ENCODE measurements at regions of chr1 and their contacts with region 1.

Region 1: GRCh38 chr1:161225534-161226319 is at the start of gene TOMM40L:
- DNase-seq: peak; percentile 99
- H3K4me3 ChIP-seq: peak within 1 kb of the TSS; percentile 71 to 72 (median 71)
- H3K27ac ChIP-seq: peak within 1 kb of the TSS; percentile 40
- H3K4me1 ChIP-seq: peaks cover 14% of the 10 kb centered on the region
- H3K27me3 ChIP-seq: no peaks in the 10 kb centered on the region
- CTCF ChIP-seq: peak; percentile 58 to 70
- total RNA-seq, gene TOMM40L: 13.8 to 16.3 TPM

Region 2: GRCh38 chr1:160781914-160782689 is 443.6 kb before region 1 on chr1:
- CTCF ChIA-PET with region 1: no interaction called
- dilution Hi-C with region 1: no loop called
- in situ Hi-C with region 1: no loop called
- intact Hi-C with region 1: no loop called
- DNase-seq: no peak
- H3K4me3 ChIP-seq: no peak overlapping the region
- H3K27ac ChIP-seq: no peak overlapping the region
- H3K4me1 ChIP-seq: peaks cover 4% of the 10 kb centered on the region
- H3K27me3 ChIP-seq: no peaks in the 10 kb centered on the region
- CTCF ChIP-seq: no peak

Region 3: GRCh38 chr1:161192476-161193465 is 33.0 kb before region 1 on chr1:
- CTCF ChIA-PET with region 1: no interaction called
- dilution Hi-C with region 1: no loop called
- in situ Hi-C with region 1: no loop called
- intact Hi-C with region 1: loop called (anchors 1 kb)
- DNase-seq: peak; percentile 48
- H3K4me3 ChIP-seq: no peak overlapping the region
- H3K27ac ChIP-seq: no peak overlapping the region
- H3K4me1 ChIP-seq: peaks cover 1% of the 10 kb centered on the region
- H3K27me3 ChIP-seq: no peaks in the 10 kb centered on the region
- CTCF ChIP-seq: peak; percentile 91 to 94

Region 4: DNA sequence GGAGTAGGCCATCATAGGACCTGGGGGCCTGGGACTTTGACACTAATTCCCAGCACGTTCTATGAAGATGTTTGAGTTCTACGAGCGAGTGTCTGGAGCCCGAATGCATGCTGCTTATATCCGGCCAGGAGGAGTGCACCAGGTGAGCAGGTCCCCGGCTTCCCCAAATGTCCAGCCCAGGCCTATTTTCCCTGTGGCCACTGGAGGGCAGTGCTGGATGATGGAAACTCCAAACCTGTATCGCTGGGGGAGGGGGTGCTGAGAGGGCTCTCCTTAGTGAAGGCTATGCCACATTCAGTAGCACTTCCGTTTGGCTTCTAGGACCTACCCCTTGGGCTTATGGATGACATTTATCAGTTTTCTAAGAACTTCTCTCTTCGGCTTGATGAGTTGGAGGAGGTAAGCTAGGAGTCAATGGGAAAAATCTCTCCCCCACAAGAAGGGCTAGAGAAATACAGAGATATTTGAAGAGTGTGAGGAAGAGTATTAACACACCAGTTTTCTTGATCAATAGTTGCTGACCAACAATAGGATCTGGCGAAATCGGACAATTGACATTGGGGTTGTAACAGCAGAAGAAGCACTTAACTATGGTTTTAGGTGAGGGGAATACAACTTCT is 15.8 kb before region 1 on chr1:
- CTCF ChIA-PET with region 1: interaction called, 3 read pairs
- dilution Hi-C with region 1: no loop called
- in situ Hi-C with region 1: no loop called
- intact Hi-C with region 1: loop called (anchors 1 kb)
- DNase-seq: peak; percentile 70
- H3K4me3 ChIP-seq: no peak overlapping the region
- H3K27ac ChIP-seq: no peak overlapping the region
- H3K4me1 ChIP-seq: no peaks in the 10 kb centered on the region
- H3K27me3 ChIP-seq: no peaks in the 10 kb centered on the region
- CTCF ChIP-seq: peak; percentile 91 to 96

Region 5: DNA sequence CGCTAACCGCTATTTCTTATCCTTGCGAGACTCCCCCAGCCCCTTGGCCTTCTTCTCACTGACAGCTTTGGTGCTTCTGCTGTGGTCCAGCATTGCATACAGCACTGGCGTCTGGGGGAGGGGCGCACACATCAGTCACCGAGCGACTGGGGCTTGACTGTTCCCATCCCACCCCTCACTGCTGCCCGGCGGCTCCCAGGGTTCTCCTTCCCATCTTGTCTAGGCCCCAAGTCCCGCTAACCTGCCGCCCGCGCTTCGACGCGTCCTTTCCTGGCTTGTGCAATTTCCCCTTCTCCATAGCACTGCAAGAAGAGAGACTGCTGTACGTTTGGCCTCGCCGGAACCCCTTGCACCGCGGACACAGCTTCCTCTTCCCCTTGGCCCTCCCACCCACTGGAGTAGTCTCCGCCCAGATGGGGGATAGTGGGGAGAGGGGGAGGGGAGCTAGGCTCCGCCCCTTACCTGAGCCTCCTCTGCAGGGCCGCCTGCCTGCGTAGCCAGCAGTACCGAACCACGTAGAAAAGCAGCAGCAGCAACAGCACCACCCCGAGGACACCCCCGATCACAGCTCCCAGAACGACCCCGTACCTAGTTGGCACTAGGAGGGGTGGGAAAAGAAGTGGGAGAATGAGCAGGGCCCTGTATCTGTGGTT is 80.3 kb after region 1 on chr1:
- CTCF ChIA-PET with region 1: interaction called, 5 read pairs
- dilution Hi-C with region 1: loop called (anchors 5 kb)
- in situ Hi-C with region 1: no loop called
- intact Hi-C with region 1: no loop called
- DNase-seq: peak; percentile 42
- H3K4me3 ChIP-seq: peak overlapping the region; percentile 51 to 85 (median 76)
- H3K27ac ChIP-seq: no peak overlapping the region
- H3K4me1 ChIP-seq: peaks cover 11% of the 10 kb centered on the region
- H3K27me3 ChIP-seq: no peaks in the 10 kb centered on the region
- CTCF ChIP-seq: peak; percentile 21 to 54

Region 6: GRCh38 chr1:161382214-161383019 is 156.7 kb after region 1 on chr1:
- CTCF ChIA-PET with region 1: interaction called, 15 read pairs
- dilution Hi-C with region 1: loop called (anchors 25 kb)
- in situ Hi-C with region 1: loop called (anchors 5 to 10 kb)
- intact Hi-C with region 1: loop called (anchors 1 kb)
- DNase-seq: peak; percentile 80
- H3K4me3 ChIP-seq: peak overlapping the region in 2 of 3 experiments; percentile 5 to 26
- H3K27ac ChIP-seq: peak overlapping the region; percentile 91
- H3K4me1 ChIP-seq: peaks cover 20% of the 10 kb centered on the region
- H3K27me3 ChIP-seq: no peaks in the 10 kb centered on the region
- CTCF ChIP-seq: peak; percentile 47 to 63